ENCODE measurements at regions of chr6 and their contacts with region 1.

Region 1: GRCh38 chr6:92122746-92123145 is 1296.6 kb downstream of the EPHA7 start:
- DNase-seq: peak; percentile 44
- H3K4me3 ChIP-seq: no peak overlapping the region
- H3K27ac ChIP-seq: no peak overlapping the region
- H3K4me1 ChIP-seq: no peaks in the 10 kb centered on the region
- H3K27me3 ChIP-seq: no peaks in the 10 kb centered on the region
- CTCF ChIP-seq: peak in 1 of 2 donors; percentile 31
- POLR2A ChIP-seq: no peak

Region 2: DNA sequence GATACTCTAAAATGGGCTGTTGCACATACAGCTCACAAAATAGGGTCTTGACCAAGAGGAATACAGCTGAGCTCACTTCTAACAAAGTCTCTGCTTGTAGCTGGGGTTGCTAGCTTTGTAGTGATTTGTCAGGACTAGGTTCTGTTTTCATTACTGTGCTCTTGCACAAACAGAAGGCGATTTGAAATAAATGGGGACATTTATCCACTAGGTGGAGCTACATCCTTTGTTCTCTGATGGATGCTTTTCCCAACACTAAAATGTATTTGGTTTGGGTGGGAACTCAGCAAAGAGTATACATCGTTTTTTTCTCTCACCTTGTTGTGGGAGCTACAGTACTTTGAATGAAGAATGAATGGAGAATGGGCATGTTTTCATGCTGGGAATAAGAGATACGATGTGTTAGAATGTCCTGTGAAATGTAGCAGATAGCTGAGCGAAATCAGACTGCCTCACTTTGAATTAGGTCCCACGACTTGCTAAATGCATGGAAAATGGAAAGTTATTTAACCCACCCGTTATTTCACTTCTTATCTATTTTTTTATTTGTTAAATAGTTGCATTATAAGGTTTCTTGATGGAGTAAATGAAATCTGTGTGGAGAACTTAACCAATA is 1041.2 kb before region 1 on chr6:
- CTCF ChIA-PET with region 1: interaction called, 3 read pairs
- POLR2A ChIA-PET with region 1: no interaction called
- dilution Hi-C with region 1: no loop called
- intact Hi-C with region 1: loop called (anchors 5 kb)
- DNase-seq: peak; percentile 52
- H3K4me3 ChIP-seq: no peak overlapping the region
- H3K27ac ChIP-seq: no peak overlapping the region
- H3K4me1 ChIP-seq: no peaks in the 10 kb centered on the region
- H3K27me3 ChIP-seq: no peaks in the 10 kb centered on the region
- CTCF ChIP-seq: peak; percentile 39 to 47
- POLR2A ChIP-seq: no peak

Region 3: GRCh38 chr6:91328241-91328640 is 794.5 kb before region 1 on chr6:
- CTCF ChIA-PET with region 1: interaction called, 9 read pairs
- POLR2A ChIA-PET with region 1: no interaction called
- dilution Hi-C with region 1: no loop called
- intact Hi-C with region 1: loop called (anchors 1 kb)
- DNase-seq: no peak
- H3K4me3 ChIP-seq: no peak overlapping the region
- H3K27ac ChIP-seq: no peak overlapping the region
- H3K4me1 ChIP-seq: no peaks in the 10 kb centered on the region
- H3K27me3 ChIP-seq: no peaks in the 10 kb centered on the region
- CTCF ChIP-seq: no peak
- POLR2A ChIP-seq: no peak

Region 4: GRCh38 chr6:92777146-92777740 is 654.5 kb after region 1 on chr6:
- CTCF ChIA-PET with region 1: no interaction called
- POLR2A ChIA-PET with region 1: no interaction called
- dilution Hi-C with region 1: no loop called
- intact Hi-C with region 1: loop called (anchors 2 kb)
- DNase-seq: peak; percentile 39
- H3K4me3 ChIP-seq: no peak overlapping the region
- H3K27ac ChIP-seq: no peak overlapping the region
- H3K4me1 ChIP-seq: no peaks in the 10 kb centered on the region
- H3K27me3 ChIP-seq: no peaks in the 10 kb centered on the region
- CTCF ChIP-seq: peak; percentile 30 to 37
- POLR2A ChIP-seq: no peak

Measured in endothelial cell of umbilical vein (primary cell).